PC-3 (cell line): ENCODE measurements at regions of chr11 and their contacts with region 1.

Region 1: DNA sequence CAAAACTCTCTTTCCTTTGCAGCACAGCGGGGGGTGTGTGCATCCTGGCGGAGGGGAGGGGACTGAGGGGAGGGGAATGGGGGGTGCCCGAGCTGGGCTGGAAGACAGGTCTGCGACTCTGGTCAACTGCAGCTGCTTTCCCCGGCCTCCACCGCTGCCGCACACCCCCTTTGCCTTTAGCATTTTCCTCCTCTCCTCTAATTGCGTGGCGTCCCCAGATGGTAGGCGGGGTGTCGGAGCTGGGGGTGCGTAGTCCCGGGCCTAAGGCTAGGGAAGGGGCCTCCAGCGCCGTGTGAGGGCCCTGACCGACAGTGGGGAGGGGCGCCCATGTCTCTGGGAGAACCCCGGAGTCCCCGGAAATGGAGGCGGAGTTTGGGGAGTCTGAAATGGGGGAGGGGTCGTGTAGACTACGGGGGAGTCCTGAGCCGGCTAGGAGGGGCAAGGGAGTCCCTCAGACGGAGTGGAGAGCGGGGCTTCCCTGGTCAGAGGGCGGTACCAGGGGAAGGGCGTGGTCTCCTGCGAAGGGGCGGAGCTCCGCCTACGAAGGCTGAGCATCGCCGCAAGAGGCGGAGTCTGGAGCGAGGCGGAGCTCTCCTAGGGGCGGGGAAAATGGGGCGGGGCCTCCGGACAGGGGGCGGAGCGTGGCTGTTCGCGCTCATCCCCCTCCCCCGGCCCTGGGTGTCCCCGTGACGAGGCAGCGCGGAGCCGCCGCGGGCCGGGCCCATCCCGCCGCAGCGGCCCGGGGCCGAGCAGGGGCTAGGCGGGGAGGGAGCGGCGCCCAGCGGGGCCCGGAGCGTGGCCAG is at the start of gene PELI3:
- DNase-seq: peak; percentile 96
- ATAC-seq: peak; percentile 92
- H3K4me3 ChIP-seq: peak within 1 kb of the TSS; percentile 92
- H3K27ac ChIP-seq: no peak within 1 kb of the TSS
- H3K4me1 ChIP-seq: peaks cover 20% of the 10 kb centered on the region
- H3K27me3 ChIP-seq: no peaks in the 10 kb centered on the region
- CTCF ChIP-seq: no peak
- total RNA-seq, gene PELI3: 22.9 and 35.2 TPM in 2 replicates

Region 2: GRCh38 chr11:66136752-66137123 is 329.7 kb before region 1 on chr11:
- CTCF ChIA-PET with region 1: no interaction called
- POLR2A ChIA-PET with region 1: no interaction called
- intact Hi-C with region 1: no loop called
- DNase-seq: peak; percentile 40
- ATAC-seq: 0 out of 2 replicates have a peak, but pooled peaks have one; percentile 9
- H3K4me3 ChIP-seq: no peak overlapping the region
- H3K27ac ChIP-seq: peak overlapping the region; percentile 3; the same call in 1 of the 2 replicates
- H3K4me1 ChIP-seq: peaks cover 16% of the 10 kb centered on the region
- H3K27me3 ChIP-seq: no peaks in the 10 kb centered on the region
- CTCF ChIP-seq: no peak

Region 3: GRCh38 chr11:66336234-66337102 is 130.0 kb before region 1 on chr11 and contains the start of gene RIN1:
- CTCF ChIA-PET with region 1: no interaction called
- POLR2A ChIA-PET with region 1: no interaction called
- intact Hi-C with region 1: no loop called
- DNase-seq: peak; percentile 95
- ATAC-seq: peak; percentile 80
- H3K4me3 ChIP-seq: peak within 1 kb of the TSS; percentile 81
- H3K27ac ChIP-seq: peak within 1 kb of the TSS; percentile 96
- H3K4me1 ChIP-seq: peaks cover 31% of the 10 kb centered on the region
- H3K27me3 ChIP-seq: no peaks in the 10 kb centered on the region
- CTCF ChIP-seq: peak; percentile 44
- total RNA-seq, gene RIN1: 41.2 and 71.8 TPM in 2 replicates

Region 4: GRCh38 chr11:66386171-66387069 is 80.0 kb before region 1 on chr11:
- CTCF ChIA-PET with region 1: no interaction called
- POLR2A ChIA-PET with region 1: interaction called, 16 read pairs
- intact Hi-C with region 1: no loop called
- DNase-seq: peak; percentile 95
- ATAC-seq: peak; percentile 77
- H3K4me3 ChIP-seq: peak overlapping the region; percentile 58
- H3K27ac ChIP-seq: no peak overlapping the region
- H3K4me1 ChIP-seq: 0 out of 2 replicates have a peak, but pooled peaks cover 3% of the 10 kb centered on the region
- H3K27me3 ChIP-seq: no peaks in the 10 kb centered on the region
- CTCF ChIP-seq: peak; percentile 98

Region 5: GRCh38 chr11:66438504-66439466 is 27.6 kb before region 1 on chr11 and contains the start of gene MRPL11:
- CTCF ChIA-PET with region 1: interaction called, 9 read pairs
- POLR2A ChIA-PET with region 1: no interaction called
- intact Hi-C with region 1: loop called (anchors 2 kb)
- DNase-seq: peak; percentile 99
- ATAC-seq: peak; percentile 88
- H3K4me3 ChIP-seq: peak within 1 kb of the TSS; percentile 77
- H3K27ac ChIP-seq: peak within 1 kb of the TSS; percentile 29
- H3K4me1 ChIP-seq: peaks cover 15% of the 10 kb centered on the region
- H3K27me3 ChIP-seq: no peaks in the 10 kb centered on the region
- CTCF ChIP-seq: peak; percentile 83
- total RNA-seq, gene MRPL11: 214 and 321 TPM in 2 replicates

Region 6: GRCh38 chr11:66616379-66617154 is 150.1 kb after region 1 on chr11 and contains the start of gene RBM14:
- CTCF ChIA-PET with region 1: interaction called, 5 read pairs
- POLR2A ChIA-PET with region 1: interaction called, 10 read pairs
- intact Hi-C with region 1: no loop called
- DNase-seq: peak; percentile 100
- ATAC-seq: peak; percentile 94
- H3K4me3 ChIP-seq: peak within 1 kb of the TSS; percentile 89
- H3K27ac ChIP-seq: peak within 1 kb of the TSS; percentile 77
- H3K4me1 ChIP-seq: peaks cover 34% of the 10 kb centered on the region
- H3K27me3 ChIP-seq: no peaks in the 10 kb centered on the region
- CTCF ChIP-seq: no peak
- total RNA-seq, gene RBM14: 79.3 and 119 TPM in 2 replicates

Region 7: DNA sequence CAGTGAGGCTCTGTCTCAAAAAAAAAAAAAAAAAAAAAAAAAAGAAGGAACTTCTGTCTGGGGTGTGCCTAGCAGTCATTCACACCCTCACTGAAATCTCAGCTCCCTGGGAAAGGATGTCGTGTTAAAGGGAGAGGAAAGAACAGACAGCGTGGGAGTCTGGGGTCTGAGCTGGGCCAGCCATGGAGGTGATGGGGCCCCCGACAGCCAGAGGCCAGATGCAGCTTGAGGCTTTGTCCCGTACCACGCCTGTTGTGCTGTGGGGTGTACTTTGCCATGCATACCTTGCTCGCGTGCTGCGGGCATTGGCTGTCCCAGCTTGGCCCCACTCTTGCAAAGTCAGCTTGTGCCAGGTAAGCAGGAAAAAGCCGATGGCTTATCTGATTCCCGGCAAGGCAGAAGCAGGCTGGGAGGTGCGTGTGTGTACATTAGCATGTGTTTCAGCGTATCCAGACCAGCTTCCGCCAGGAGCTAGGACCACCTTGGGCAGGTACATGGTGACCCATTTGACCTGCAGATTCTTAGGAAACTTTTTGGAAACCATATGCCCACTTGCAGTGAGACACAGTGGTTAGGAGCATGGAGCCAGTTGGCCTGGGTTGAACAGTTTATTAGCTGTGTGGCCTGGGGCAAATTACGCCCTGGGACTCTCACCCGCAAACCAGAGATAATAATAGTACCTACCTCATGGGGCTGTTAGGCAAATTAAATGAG is 561.2 kb after region 1 on chr11:
- CTCF ChIA-PET with region 1: no interaction called
- POLR2A ChIA-PET with region 1: interaction called, 14 read pairs
- intact Hi-C with region 1: no loop called
- DNase-seq: no peak
- ATAC-seq: no peak
- H3K4me3 ChIP-seq: no peak overlapping the region
- H3K27ac ChIP-seq: no peak overlapping the region
- H3K4me1 ChIP-seq: peaks cover 41% of the 10 kb centered on the region
- H3K27me3 ChIP-seq: no peaks in the 10 kb centered on the region
- CTCF ChIP-seq: no peak